ENCODE measurements at regions of chr5 and their contacts with region 1.

Region 1: GRCh38 chr5:141001854-141002604 is 35.8 kb downstream of the PCDHAC2 start:
- DNase-seq: peak; percentile 56
- H3K4me3 Mint-ChIP-seq: peak overlapping the region; percentile 74
- H3K27ac Mint-ChIP-seq: peak overlapping the region; percentile 94
- H3K4me1 Mint-ChIP-seq: peaks cover 30% of the 10 kb centered on the region
- H3K27me3 Mint-ChIP-seq: no peaks in the 10 kb centered on the region
- CTCF ChIP-seq: no peak

Region 2: DNA sequence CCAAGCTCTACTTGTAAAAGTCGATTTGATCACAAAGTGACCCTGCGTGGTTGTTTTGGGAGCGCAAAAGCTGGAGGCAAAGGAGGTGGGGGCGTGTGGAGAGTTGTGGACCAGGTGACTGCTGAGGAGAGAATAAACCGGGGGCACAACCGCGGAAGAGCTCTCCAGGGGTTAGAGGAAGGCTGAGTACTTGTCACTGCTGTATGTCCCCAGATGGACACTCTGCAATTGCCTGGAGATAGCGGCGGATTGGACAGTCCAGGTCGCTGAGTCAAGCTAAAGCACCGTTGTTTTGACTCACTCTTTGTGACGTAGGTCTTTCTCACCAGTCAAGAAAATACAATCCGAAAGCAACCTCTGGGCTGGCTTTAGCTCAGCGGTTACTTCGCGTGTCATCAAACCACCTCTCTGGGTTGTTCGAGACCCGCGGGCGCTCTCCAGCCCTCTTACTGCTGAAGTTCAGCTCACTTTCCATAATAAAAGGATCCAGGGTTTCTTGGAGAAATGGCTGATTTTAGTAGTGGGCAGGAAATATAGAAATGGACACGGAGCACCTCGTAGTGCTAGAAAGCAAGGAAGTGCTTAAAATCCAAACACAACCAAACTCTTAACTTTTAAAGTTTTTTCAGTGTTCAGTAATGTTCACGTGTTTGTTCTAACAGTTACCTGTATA is 276.1 kb before region 1 on chr5:
- CTCF ChIA-PET with region 1: interaction called, 3 read pairs
- POLR2A ChIA-PET with region 1: no interaction called
- intact Hi-C with region 1: loop called (anchors 1 kb)
- DNase-seq: peak; percentile 99
- H3K4me3 Mint-ChIP-seq: peak overlapping the region; percentile 72
- H3K27ac Mint-ChIP-seq: peak overlapping the region; percentile 42
- H3K4me1 Mint-ChIP-seq: peaks cover 6% of the 10 kb centered on the region
- H3K27me3 Mint-ChIP-seq: no peaks in the 10 kb centered on the region
- CTCF ChIP-seq: no peak

Region 3: GRCh38 chr5:140875066-140876065 is 126.7 kb before region 1 on chr5 and contains the start of gene PCDHA12:
- CTCF ChIA-PET with region 1: interaction called, 21 read pairs
- POLR2A ChIA-PET with region 1: interaction called, 10 read pairs
- intact Hi-C with region 1: loop called (anchors 1 kb)
- DNase-seq: peak; percentile 76
- H3K4me3 Mint-ChIP-seq: peak within 1 kb of the TSS; percentile 86
- H3K27ac Mint-ChIP-seq: peak within 1 kb of the TSS; percentile 92
- H3K4me1 Mint-ChIP-seq: peaks cover 4% of the 10 kb centered on the region
- H3K27me3 Mint-ChIP-seq: no peaks in the 10 kb centered on the region
- CTCF ChIP-seq: peak; percentile 68
- total RNA-seq, gene PCDHA12: 6.1 and 9.6 TPM in 2 replicates

Region 4: DNA sequence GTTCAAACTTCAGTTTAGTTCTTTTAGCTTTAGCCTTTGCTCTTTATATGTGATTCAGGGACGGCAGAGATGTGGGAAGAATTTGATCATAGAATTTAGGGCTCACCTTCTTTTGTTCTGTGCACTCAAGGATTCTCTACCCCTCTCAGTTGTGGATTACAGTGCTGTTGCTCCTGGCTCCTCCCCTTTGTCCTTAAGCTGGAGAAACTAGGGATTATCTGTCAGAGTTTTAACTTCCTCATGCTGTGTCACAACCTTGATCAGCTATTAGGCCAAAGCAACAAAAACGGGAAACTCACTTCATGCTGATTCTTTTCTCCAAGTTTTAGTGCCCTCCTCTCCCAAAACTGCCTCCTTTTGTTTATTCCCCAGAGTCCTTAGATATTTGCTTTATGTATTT is 48.8 kb before region 1 on chr5:
- CTCF ChIA-PET with region 1: interaction called, 3 read pairs
- POLR2A ChIA-PET with region 1: interaction called, 19 read pairs
- intact Hi-C with region 1: no loop called
- DNase-seq: no peak
- H3K4me3 Mint-ChIP-seq: no peak overlapping the region
- H3K27ac Mint-ChIP-seq: no peak overlapping the region
- H3K4me1 Mint-ChIP-seq: peaks cover 20% of the 10 kb centered on the region
- H3K27me3 Mint-ChIP-seq: no peaks in the 10 kb centered on the region
- CTCF ChIP-seq: no peak

Region 5: GRCh38 chr5:140966293-140967225 is 35.5 kb before region 1 on chr5 and contains the start of gene PCDHAC2:
- CTCF ChIA-PET with region 1: interaction called, 7 read pairs
- POLR2A ChIA-PET with region 1: interaction called, 146 read pairs
- intact Hi-C with region 1: loop called (anchors 5 kb)
- DNase-seq: peak; percentile 55
- H3K4me3 Mint-ChIP-seq: peak within 1 kb of the TSS; percentile 94
- H3K27ac Mint-ChIP-seq: peak within 1 kb of the TSS; percentile 90
- H3K4me1 Mint-ChIP-seq: peaks cover 24% of the 10 kb centered on the region
- H3K27me3 Mint-ChIP-seq: no peaks in the 10 kb centered on the region
- CTCF ChIP-seq: no peak
- total RNA-seq, gene PCDHAC2: 9.3 and 12.3 TPM in 2 replicates

Region 6: DNA sequence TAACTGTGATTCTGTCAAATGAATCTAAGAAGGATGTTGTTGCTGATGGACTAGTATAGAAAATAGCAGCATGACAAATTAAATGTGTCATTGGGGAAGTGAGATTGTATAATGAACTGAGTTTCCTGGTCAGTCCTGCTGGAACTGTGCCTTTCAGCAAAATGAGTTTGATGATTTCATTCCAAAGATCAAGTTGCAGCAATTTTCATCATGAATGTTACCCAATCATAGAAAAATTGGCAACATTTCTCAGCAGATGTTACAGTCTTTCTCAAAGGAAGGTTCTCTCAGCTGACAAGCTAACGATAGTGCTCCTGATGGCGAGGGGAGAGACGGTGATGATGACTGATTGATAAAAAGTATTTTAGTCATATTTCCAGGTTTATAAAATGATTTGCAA is 25.0 kb before region 1 on chr5:
- CTCF ChIA-PET with region 1: interaction called, 9 read pairs
- POLR2A ChIA-PET with region 1: interaction called, 146 read pairs
- intact Hi-C with region 1: loop called (anchors 1 kb)
- DNase-seq: peak; percentile 86
- H3K4me3 Mint-ChIP-seq: peak overlapping the region; percentile 32
- H3K27ac Mint-ChIP-seq: peak overlapping the region; percentile 94
- H3K4me1 Mint-ChIP-seq: peaks cover 37% of the 10 kb centered on the region
- H3K27me3 Mint-ChIP-seq: no peaks in the 10 kb centered on the region
- CTCF ChIP-seq: no peak

Region 7: DNA sequence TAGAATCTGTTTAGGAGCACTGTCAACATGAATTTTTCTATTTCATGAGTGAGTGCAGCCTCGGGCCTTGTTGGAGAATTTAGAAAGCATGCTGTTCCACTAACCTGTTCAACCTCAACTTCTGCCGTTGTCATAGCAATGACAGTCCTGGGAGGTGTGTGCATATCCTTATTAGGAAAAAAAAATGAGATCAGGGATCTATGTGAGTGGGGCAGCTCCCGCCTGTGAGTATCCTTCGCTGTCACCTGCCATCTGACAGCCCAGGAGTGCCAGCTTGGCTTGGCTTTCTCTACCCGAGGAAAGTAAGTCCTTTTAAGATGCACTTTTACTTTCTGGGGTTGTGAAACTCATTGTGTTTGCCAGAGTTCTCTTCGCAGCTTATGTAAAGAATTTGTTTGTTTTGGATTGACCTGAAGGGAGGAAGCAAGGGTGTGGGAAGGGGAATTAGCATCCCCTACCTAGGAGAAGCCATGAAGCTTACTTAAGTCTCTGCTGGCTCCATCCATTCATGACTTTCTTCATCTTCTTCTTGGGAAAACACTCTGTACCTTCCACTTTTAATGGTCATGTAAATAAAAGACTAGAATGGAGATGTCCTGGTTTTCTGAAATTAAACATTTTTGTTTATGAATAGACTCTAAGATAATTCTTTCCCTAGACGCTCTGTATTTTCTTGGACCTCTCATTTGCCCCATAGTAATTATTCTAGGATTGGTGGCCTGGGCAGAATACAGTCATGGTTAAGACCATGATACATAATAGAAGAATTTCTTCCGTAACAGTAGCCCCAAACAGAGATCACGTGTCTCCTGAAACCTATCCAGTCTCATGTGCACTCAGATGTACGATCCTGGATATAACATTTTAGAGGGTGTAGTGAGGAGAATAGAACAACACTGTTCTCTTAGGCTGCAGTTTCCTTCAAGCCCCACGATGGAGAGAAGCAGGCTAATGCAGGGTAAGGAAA is 13.7 kb before region 1 on chr5:
- CTCF ChIA-PET with region 1: interaction called, 8 read pairs
- POLR2A ChIA-PET with region 1: interaction called, 12 read pairs
- intact Hi-C with region 1: no loop called
- DNase-seq: peak; percentile 59
- H3K4me3 Mint-ChIP-seq: no peak overlapping the region
- H3K27ac Mint-ChIP-seq: no peak overlapping the region
- H3K4me1 Mint-ChIP-seq: peaks cover 13% of the 10 kb centered on the region
- H3K27me3 Mint-ChIP-seq: no peaks in the 10 kb centered on the region
- CTCF ChIP-seq: no peak

Region 8: GRCh38 chr5:141547488-141547887 is 545.5 kb after region 1 on chr5:
- CTCF ChIA-PET with region 1: no interaction called
- POLR2A ChIA-PET with region 1: no interaction called
- intact Hi-C with region 1: no loop called
- DNase-seq: peak; percentile 39
- H3K4me3 Mint-ChIP-seq: no peak overlapping the region
- H3K27ac Mint-ChIP-seq: no peak overlapping the region
- H3K4me1 Mint-ChIP-seq: no peaks in the 10 kb centered on the region
- H3K27me3 Mint-ChIP-seq: no peaks in the 10 kb centered on the region
- CTCF ChIP-seq: no peak

Measured in MCF 10A (cell line).